Colonic mucosa (tissue), 4 donors: ENCODE measurements at regions of chr15 and their contacts with region 1.

Region 1: GRCh38 chr15:68875377-68876116 is 54.8 kb upstream of the SPESP1 start:
- DNase-seq: peak; percentile 95
- H3K4me3 ChIP-seq: peak overlapping the region; percentile 23
- H3K27ac ChIP-seq: no peak overlapping the region
- H3K4me1 ChIP-seq: no peaks in the 10 kb centered on the region
- H3K27me3 ChIP-seq: no peaks in the 10 kb centered on the region
- CTCF ChIP-seq: peak; percentile 84

Region 2: GRCh38 chr15:68550481-68551295 is 324.9 kb before region 1 on chr15:
- intact Hi-C with region 1: loop called (anchors 5 kb)
- DNase-seq: peak; percentile 77
- H3K4me3 ChIP-seq: no peak overlapping the region
- H3K27ac ChIP-seq: no peak overlapping the region
- H3K4me1 ChIP-seq: no peaks in the 10 kb centered on the region
- H3K27me3 ChIP-seq: no peaks in the 10 kb centered on the region
- CTCF ChIP-seq: peak; percentile 92

Region 3: DNA sequence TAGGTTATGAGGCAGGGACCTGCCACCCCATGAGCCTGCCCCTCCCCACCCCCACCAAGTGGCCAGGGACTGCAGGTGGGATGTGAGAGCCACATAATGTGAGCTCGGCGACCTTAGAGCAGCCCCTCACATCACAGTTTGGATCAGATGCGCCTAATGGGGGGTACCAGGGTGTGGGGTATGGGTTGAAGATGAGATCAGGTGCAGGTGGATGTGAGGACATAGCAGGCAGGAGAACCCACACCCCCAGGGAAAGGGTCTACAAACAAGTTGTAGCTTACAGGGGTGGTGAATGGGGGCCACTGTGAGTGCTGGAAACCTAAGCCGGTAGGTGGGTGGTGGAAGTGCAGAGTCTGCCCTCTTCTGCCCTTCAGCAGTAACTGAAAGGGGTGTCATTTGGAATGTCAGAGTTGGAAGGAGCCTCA is 202.8 kb before region 1 on chr15:
- intact Hi-C with region 1: loop called (anchors 5 kb)
- DNase-seq: no peak
- H3K4me3 ChIP-seq: no peak overlapping the region
- H3K27ac ChIP-seq: no peak overlapping the region
- H3K4me1 ChIP-seq: peaks cover 2% of the 10 kb centered on the region
- H3K27me3 ChIP-seq: no peaks in the 10 kb centered on the region
- CTCF ChIP-seq: no peak

Region 4: GRCh38 chr15:68730471-68730919 is 145.1 kb before region 1 on chr15:
- intact Hi-C with region 1: loop called (anchors 2 kb)
- DNase-seq: peak; percentile 35
- H3K4me3 ChIP-seq: no peak overlapping the region
- H3K27ac ChIP-seq: no peak overlapping the region
- H3K4me1 ChIP-seq: no peaks in the 10 kb centered on the region
- H3K27me3 ChIP-seq: no peaks in the 10 kb centered on the region
- CTCF ChIP-seq: peak; percentile 31

Region 5: GRCh38 chr15:68749793-68750192 is 125.8 kb before region 1 on chr15:
- intact Hi-C with region 1: no loop called
- DNase-seq: no peak
- H3K4me3 ChIP-seq: no peak overlapping the region
- H3K27ac ChIP-seq: no peak overlapping the region
- H3K4me1 ChIP-seq: no peaks in the 10 kb centered on the region
- H3K27me3 ChIP-seq: no peaks in the 10 kb centered on the region
- CTCF ChIP-seq: no peak

Region 6: DNA sequence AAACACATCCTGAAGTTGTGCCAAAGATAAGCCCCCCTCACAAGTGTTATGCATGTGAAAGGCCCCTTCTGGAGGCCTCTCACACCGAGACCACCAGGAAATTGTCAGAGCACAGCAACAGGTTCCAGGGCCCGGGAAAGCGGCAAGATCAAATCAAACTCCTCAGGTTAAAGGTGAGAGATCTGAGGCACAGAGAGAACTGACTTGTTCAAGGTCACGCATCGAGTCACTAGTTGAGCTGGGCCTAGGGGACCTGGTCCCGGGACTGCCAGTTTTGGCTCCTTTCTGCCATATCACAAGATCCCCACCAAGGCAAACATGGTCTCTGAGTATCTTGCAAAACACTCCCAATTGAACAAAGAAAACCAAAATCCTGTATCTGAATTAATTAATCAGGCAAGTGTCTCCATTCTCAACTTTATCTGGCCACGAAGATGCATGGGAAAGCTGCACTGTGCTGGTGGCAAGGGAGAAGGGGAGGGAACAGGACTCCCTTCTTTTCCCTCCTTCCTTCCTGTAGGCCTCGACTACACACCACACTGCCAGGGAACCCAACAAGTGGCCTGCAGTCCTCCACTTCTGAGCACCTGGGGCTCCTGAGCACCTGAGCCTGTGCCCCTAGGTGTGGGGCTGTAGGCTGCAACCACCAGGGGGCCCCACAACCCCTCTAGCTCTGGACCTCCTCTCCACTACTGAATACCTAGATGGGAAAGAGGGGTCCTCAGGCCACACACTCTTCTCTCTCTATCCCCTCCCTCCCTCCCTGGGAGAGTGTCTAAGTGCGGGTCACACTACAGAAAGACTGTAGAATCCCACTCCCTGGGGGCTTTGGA is 92.1 kb before region 1 on chr15:
- intact Hi-C with region 1: loop called (anchors 2 kb)
- DNase-seq: peak; percentile 53
- H3K4me3 ChIP-seq: no peak overlapping the region
- H3K27ac ChIP-seq: no peak overlapping the region
- H3K4me1 ChIP-seq: peaks cover 12% of the 10 kb centered on the region
- H3K27me3 ChIP-seq: no peaks in the 10 kb centered on the region
- CTCF ChIP-seq: peak; percentile 83

Region 7: GRCh38 chr15:69045808-69046207 is 170.3 kb after region 1 on chr15:
- intact Hi-C with region 1: no loop called
- DNase-seq: no peak
- H3K4me3 ChIP-seq: no peak overlapping the region
- H3K27ac ChIP-seq: no peak overlapping the region
- H3K4me1 ChIP-seq: no peaks in the 10 kb centered on the region
- H3K27me3 ChIP-seq: no peaks in the 10 kb centered on the region
- CTCF ChIP-seq: no peak